ENCODE measurements at regions of chr17 and their contacts with region 1.

Region 1: DNA sequence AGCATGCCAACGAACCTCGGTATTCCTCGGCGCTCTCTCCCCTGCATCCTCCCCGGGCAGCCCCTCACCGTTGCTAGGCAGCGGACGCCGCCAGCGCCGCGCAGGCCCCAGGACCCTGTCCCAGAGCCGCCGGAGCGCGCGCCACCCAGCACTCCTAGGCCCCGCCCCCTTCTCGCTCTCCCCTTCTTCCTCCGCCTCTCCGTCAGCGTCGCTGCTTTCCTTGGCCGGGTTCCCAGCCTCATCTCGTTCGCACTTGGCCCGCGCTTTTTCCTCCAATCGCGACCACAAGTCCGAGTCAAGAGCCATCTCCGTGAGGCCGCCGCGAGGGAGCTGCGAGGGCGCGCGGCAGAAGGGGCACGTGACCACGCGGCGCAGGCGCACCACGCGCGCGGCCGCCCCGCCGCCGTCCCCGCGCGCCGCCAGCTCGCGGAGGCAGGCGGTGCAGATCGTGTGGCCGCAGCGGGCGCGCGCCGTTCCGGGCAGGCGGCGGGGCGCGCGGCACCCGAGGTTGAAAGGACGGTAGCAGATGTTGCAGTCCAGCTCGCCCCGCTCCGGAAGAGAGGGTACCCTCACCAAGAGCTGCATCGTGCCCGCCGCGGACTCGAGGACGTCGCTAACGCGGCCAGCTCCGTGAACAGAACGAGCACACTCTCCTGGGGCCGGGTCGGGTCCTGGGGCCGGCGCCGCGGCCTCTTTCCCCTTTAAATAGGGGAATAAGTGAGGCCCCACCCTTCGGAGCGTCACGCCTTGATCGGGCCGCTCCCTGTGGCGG is at the start of gene RNF227:
- DNase-seq: peak; percentile 85
- CTCF ChIP-seq: no peak

Region 2: DNA sequence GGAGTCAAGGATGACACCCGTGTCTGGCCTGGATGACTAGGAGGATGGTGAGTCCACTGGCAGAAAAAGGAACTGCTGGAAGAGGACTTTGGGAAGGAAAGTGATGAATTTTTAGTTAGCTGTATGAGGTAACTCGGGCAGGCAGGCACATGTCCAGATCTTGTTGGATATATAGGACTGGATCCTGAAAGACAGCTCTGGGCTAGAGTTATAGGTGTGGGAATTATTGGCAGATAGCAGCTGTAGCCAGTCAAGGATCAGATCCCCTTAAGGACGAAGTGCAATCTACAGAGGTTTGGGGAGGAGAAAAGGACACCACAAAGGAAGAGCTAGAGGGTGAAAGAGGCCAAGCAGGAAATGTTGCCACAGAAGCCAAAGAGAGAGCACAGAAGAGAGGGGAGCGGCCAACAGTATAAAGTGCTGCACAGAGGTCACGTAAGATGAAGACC is 47.9 kb before region 1 on chr17:
- CTCF ChIA-PET with region 1: interaction called, 10 read pairs
- POLR2A ChIA-PET with region 1: no interaction called
- DNase-seq: no peak
- CTCF ChIP-seq: no peak

Region 3: DNA sequence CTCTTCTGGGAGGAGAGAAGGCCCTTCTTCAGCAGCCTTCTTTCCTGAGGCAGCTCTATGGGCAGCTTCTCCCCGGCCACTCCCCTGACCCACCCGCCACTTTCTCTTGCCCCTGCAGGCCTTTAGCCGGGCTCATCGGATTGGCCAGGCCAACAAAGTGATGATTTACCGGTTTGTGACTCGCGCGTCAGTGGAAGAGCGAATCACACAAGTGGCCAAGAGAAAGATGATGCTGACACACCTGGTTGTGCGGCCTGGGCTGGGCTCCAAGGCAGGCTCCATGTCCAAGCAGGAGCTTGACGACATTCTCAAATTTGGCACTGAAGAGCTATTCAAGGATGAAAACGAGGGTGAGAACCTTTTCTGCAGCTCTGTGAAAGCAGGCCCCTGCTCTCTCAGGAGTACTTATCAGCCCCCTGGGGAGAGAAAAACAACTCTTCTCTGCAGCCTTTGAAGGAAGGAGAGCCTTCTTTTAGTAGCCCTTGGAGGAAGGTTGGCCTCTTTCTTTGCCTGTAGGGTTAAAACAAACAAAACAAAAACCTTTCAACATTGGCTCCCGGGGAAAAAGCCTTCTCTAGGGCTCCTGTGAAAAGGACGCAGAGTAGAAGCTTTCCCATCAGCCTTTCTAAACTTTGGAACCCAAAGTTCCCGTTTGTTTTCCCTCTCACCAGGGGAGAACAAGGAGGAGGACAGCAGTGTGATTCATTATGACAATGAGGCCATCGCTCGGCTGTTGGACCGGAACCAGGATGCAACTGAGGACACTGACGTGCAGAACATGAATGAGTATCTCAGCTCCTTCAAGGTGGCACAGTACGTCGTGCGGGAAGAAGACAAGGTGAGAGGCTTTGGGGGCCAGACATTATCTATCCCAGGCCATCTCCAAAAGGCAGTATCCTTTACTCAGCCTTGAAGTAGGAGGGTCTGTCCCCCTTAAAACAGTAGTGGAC is 12.4 kb before region 1 on chr17:
- CTCF ChIA-PET with region 1: interaction called, 23 read pairs
- POLR2A ChIA-PET with region 1: no interaction called
- DNase-seq: no peak
- CTCF ChIP-seq: no peak

Region 4: GRCh38 chr17:7940034-7940433 is 24.2 kb after region 1 on chr17:
- CTCF ChIA-PET with region 1: interaction called, 77 read pairs
- POLR2A ChIA-PET with region 1: no interaction called
- DNase-seq: no peak
- CTCF ChIP-seq: no peak

Measured in GM10248 (cell line).